ENCODE measurements at regions of chr17 and their contacts with region 1.

Region 1: GRCh38 chr17:17496189-17497064 is at the start of gene RASD1:
- DNase-seq: peak; percentile 88
- H3K4me3 ChIP-seq: peak within 1 kb of the TSS; percentile 71
- H3K27ac ChIP-seq: peak within 1 kb of the TSS; percentile 38
- H3K4me1 ChIP-seq: peaks cover 36% of the 10 kb centered on the region
- H3K27me3 ChIP-seq: peaks cover 13% of the 10 kb centered on the region
- CTCF ChIP-seq: peak; percentile 67
- total RNA-seq, gene RASD1: 0.21 and 0.24 TPM in 2 replicates

Region 2: GRCh38 chr17:17568749-17569195 is 72.3 kb after region 1 on chr17:
- CTCF ChIA-PET with region 1: interaction called, 26 read pairs
- POLR2A ChIA-PET with region 1: no interaction called
- intact Hi-C with region 1: loop called (anchors 2 kb)
- DNase-seq: peak; percentile 46
- H3K4me3 ChIP-seq: no peak overlapping the region
- H3K27ac ChIP-seq: no peak overlapping the region
- H3K4me1 ChIP-seq: no peaks in the 10 kb centered on the region
- H3K27me3 ChIP-seq: no peaks in the 10 kb centered on the region
- CTCF ChIP-seq: peak; percentile 87

Region 3: DNA sequence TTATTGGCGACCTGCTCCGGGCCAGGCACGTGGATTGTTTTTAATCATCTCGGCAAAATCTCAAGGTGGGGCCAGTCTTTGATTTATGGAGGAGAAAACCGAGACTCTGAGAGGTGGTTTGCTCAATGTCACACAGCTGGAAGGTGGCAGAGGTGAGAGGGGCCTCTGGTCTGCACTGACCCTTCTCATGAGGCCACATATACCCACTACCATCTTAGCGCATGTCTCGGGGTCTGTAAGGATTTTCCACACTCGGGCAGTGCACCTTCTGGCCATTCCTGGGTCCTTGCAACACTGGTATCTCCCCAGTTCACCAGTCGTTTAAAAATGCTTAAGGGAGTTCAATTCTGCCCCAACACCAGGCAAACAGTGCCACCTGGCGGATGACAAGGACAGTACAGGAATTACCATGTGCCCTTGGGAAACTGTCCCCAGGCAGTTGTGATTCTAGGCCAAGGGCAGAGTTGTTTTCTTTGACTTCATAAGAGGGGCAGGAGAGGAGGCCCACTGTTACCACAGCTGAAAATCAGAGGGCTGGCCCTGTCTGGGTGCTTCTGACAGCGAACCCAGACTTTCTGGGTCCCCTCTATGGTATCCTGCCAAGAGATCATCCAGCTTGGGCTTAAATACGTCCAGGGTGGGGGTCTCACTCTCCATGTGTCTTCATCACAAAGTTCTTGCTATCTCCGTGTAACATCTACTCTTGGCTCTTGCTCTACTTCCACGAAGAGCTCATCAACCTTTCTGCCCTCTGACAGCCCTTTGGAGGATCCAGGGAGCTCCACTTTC is 145.4 kb after region 1 on chr17:
- CTCF ChIA-PET with region 1: interaction called, 8 read pairs
- POLR2A ChIA-PET with region 1: no interaction called
- intact Hi-C with region 1: loop called (anchors 2 kb)
- DNase-seq: peak; percentile 87
- H3K4me3 ChIP-seq: no peak overlapping the region
- H3K27ac ChIP-seq: no peak overlapping the region
- H3K4me1 ChIP-seq: no peaks in the 10 kb centered on the region
- H3K27me3 ChIP-seq: no peaks in the 10 kb centered on the region
- CTCF ChIP-seq: peak; percentile 91

Region 4: DNA sequence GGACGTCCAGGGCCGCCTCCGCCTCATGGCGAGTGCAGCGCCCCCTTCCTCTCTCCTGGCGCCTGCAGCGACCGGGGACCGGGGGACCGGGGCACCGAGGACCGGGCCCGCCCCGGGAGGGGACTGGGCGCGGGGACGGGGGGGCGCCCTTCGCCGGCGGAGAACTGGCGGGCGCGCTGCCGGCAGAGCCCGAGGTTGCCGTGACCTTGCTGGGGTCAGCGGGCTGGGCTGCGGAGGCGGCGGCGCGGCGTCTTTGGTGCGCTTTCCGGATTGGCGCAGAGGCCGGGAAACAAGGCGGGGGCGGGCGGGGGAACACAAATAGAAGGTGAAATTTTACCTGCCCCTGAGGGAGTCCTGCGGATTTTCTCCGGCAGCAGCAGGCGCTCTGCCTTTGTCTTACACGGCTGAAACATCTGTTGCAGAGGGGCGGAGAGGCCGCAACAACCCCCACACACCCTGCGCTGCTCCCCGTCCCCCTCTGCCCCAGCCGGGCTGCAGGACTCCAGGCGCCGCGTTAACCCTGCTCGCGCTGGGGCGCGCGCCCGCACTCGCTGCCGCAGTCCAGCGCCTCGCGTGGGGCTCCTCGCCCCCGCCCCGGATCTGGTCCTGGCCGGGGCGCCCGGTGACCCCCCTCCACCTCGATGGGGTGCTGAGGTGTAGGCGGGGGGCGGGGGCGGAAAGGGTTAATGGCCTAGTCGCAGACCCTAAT is 286.8 kb after region 1 on chr17:
- CTCF ChIA-PET with region 1: no interaction called
- POLR2A ChIA-PET with region 1: no interaction called
- intact Hi-C with region 1: no loop called
- DNase-seq: peak; percentile 82
- H3K4me3 ChIP-seq: peak overlapping the region; percentile 63
- H3K27ac ChIP-seq: peak overlapping the region; percentile 86
- H3K4me1 ChIP-seq: peaks cover 73% of the 10 kb centered on the region
- H3K27me3 ChIP-seq: no peaks in the 10 kb centered on the region
- CTCF ChIP-seq: peak; percentile 47

Region 5: DNA sequence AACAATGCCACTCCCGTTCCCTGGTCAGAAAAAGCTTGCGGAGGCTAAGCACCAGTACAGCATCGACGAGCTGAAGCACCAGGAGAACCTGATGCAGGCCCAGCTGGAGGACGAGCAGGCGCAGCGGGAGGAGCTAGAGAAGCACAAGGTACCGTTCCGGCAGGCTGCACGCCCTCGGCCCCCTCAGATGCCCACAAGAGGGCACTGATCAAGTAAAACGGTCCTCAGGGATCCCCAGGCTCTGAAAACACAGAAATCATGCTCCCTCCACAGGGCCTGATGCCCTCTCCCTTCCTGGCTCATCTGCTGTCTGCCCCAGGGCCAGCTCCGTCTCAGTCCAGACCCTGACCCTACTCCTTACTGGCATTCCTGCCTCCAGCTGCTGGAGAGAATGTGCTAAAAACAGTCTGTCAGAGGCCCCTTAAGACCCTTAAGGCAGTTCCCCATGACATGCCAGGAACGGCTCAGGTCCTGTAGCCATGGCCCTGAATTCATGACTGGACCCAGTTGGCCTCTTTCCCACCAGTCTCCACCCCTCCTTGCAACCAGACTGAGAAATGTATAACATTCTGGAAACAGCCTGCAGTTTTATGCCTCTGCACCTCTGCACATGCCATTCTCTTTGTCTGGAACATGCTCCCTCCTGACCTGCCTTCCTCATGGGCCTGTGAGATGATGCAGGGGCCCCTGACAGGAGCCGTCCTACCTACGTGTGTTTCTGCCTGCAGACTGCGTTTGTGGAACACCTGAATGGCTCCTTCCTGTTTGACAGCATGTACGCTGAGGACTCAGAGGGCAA is 498.0 kb after region 1 on chr17:
- CTCF ChIA-PET with region 1: interaction called, 11 read pairs
- POLR2A ChIA-PET with region 1: no interaction called
- intact Hi-C with region 1: no loop called
- DNase-seq: peak; percentile 38
- H3K4me3 ChIP-seq: no peak overlapping the region
- H3K27ac ChIP-seq: no peak overlapping the region
- H3K4me1 ChIP-seq: no peaks in the 10 kb centered on the region
- H3K27me3 ChIP-seq: no peaks in the 10 kb centered on the region
- CTCF ChIP-seq: peak; percentile 47

Measured in A673 (cell line).